WTC11 (cell line): ENCODE measurements at regions of chr2 and their contacts with region 1.

Region 1: DNA sequence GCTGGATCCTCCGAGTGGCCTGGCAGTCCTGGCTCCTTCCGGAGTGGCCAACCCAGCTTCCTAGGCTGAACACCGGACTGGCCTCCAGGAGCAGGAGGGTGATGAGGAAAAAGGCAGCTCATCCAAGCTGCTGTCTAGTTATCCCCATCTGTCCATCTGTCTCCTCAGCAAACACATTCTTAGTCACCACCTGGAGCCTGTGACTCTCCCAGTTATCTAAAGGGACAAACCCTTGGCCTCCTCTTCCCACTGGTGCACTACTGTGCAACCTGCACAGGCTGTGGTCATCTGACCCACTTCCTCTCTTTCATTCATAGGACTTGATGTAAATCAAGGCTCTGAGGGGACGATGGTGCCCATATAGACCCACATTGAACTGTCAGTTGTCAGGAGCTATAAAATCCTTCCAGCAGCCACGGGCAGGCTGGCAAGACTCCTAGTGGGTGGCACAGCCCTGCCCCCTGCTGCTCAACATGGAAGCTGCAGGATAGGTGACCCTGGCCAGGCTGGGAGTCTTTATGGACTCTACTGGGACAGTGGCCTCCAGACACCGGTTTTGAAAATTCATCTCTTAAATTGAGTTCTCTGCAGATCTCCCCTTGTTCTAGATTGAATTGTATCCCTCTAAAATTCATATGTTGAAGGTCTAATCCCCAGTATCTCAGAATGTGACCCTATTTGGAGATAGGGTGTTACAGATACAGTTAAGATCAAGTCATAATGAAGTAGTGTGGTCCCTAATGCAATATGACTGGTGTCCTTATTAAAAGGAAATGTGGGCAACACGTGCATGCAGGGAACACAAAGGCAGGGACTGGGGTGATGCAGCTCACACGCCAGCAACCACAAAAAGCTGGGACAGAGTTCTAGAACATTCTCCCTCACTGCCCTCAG is 29.3 kb upstream of the DUSP2 start:
- DNase-seq: peak; percentile 82
- ATAC-seq: peak; percentile 98
- H3K4me3 Mint-ChIP-seq: no peak overlapping the region
- H3K27ac Mint-ChIP-seq: no peak overlapping the region
- H3K4me1 Mint-ChIP-seq: no peaks in the 10 kb centered on the region
- H3K27me3 Mint-ChIP-seq: no peaks in the 10 kb centered on the region
- CTCF ChIP-seq: peak; percentile 76

Region 2: GRCh38 chr2:96024336-96025193 is 149.9 kb before region 1 on chr2:
- CTCF ChIA-PET with region 1: interaction called, 15 read pairs
- POLR2A ChIA-PET with region 1: no interaction called
- DNase-seq: no peak
- ATAC-seq: no peak
- H3K4me3 Mint-ChIP-seq: no peak overlapping the region
- H3K27ac Mint-ChIP-seq: no peak overlapping the region
- H3K4me1 Mint-ChIP-seq: 0 out of 2 replicates have a peak, but pooled peaks cover 3% of the 10 kb centered on the region
- H3K27me3 Mint-ChIP-seq: no peaks in the 10 kb centered on the region
- CTCF ChIP-seq: no peak

Region 3: GRCh38 chr2:96108541-96109360 is 65.7 kb before region 1 on chr2:
- CTCF ChIA-PET with region 1: interaction called, 20 read pairs
- POLR2A ChIA-PET with region 1: no interaction called
- DNase-seq: peak; percentile 38
- ATAC-seq: peak; percentile 74
- H3K4me3 Mint-ChIP-seq: peak overlapping the region; percentile 33; the same call in 1 of the 2 replicates
- H3K27ac Mint-ChIP-seq: peak overlapping the region; percentile 19; the same call in 1 of the 2 replicates
- H3K4me1 Mint-ChIP-seq: peaks cover 23% of the 10 kb centered on the region
- H3K27me3 Mint-ChIP-seq: no peaks in the 10 kb centered on the region; the same call in 1 of the 2 replicates
- CTCF ChIP-seq: no peak

Region 4: GRCh38 chr2:96116879-96117697 is 57.4 kb before region 1 on chr2:
- CTCF ChIA-PET with region 1: interaction called, 36 read pairs
- POLR2A ChIA-PET with region 1: no interaction called
- DNase-seq: peak; percentile 65
- ATAC-seq: peak; percentile 72
- H3K4me3 Mint-ChIP-seq: peak overlapping the region; percentile 59
- H3K27ac Mint-ChIP-seq: no peak overlapping the region
- H3K4me1 Mint-ChIP-seq: peaks cover 28% of the 10 kb centered on the region
- H3K27me3 Mint-ChIP-seq: peaks cover 40% of the 10 kb centered on the region
- CTCF ChIP-seq: peak; percentile 75

Region 5: DNA sequence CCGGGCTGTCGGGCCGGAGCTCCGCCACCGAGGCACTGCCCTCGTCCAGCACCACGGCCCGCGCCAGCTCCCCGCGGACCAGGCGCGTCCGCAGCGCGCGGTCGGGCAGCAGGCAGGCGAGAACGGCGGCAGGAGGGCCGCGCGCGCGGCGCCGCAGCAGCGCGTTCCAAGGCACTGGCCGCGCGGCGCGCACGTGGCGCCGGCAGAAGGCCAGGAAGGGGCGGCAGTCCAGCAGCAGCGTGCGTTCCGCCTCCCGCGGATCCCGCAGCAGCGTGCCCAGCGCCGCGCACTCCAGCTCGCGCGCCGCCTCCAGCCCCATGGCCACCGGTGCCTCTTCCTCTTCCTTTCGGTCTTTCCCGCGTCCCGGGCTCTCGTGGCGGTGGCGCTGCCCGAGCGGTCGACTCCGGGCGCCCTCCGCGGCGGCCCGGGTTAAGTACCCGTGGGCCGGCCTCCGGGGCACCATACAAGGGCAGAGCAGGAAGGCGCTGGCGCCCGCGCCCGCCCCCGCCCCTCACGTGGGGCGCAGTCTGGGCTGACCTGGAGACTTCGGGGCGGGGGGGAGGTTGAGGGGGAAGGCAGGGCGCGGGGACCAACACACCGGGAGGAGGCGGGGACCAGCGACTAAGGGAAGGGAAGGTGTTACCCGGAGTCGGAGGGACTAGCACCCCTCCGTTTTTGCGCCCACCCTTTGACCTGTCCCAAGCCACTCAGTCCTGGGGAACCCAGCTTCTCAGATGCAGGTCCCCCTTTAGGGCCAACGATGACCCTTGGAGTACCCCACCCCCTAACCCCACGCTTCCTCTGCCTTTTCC is 29.3 kb before region 1 on chr2 and contains the start of gene DUSP2:
- CTCF ChIA-PET with region 1: interaction called, 214 read pairs
- POLR2A ChIA-PET with region 1: interaction called, 4 read pairs
- DNase-seq: peak; percentile 54
- ATAC-seq: peak; percentile 38
- H3K4me3 Mint-ChIP-seq: peak within 1 kb of the TSS; percentile 76
- H3K27ac Mint-ChIP-seq: no peak within 1 kb of the TSS
- H3K4me1 Mint-ChIP-seq: peaks cover 25% of the 10 kb centered on the region
- H3K27me3 Mint-ChIP-seq: peaks cover 35% of the 10 kb centered on the region
- CTCF ChIP-seq: no peak
- total RNA-seq, gene DUSP2: 4.7 to 6.8 TPM (median 5.8 TPM) in 3 replicates

Region 6: GRCh38 chr2:96157651-96158553 is 16.6 kb before region 1 on chr2:
- CTCF ChIA-PET with region 1: interaction called, 23 read pairs
- POLR2A ChIA-PET with region 1: no interaction called
- DNase-seq: no peak
- ATAC-seq: peak; percentile 8
- H3K4me3 Mint-ChIP-seq: no peak overlapping the region
- H3K27ac Mint-ChIP-seq: no peak overlapping the region
- H3K4me1 Mint-ChIP-seq: peaks cover 14% of the 10 kb centered on the region
- H3K27me3 Mint-ChIP-seq: no peaks in the 10 kb centered on the region; the same call in 1 of the 2 replicates
- CTCF ChIP-seq: no peak

Region 7: DNA sequence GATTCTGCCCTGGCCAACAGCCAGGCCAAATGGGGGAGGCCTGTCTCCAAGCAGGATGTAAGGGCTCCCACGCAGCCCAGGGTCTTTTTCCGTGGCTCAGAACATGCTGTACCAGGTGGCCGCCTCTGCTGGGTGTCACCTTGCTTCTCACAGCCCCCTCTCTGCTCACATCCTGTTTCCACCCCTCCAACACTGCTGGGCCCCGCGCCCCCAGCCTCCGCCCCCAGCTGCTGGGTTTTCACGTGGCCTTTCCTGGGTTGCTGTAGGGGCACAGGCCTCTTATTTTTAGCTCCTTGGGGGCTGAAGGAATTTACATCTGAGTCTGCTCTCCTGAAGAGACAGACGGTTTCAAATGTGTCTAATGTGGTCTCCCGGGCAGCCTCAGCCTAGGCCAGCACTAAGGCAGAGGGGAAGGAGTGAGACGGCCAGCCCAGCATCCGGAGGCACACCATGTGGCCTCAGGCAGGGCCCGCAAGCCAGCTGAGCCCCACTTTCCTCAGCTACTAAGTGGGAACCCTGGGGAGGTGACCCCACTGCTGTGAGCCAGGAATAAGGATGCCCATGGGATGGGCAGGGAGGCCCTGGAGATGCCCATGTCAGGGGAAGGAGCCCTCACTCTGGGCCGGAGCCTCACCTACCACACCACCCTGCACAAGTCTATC is 10.6 kb before region 1 on chr2:
- CTCF ChIA-PET with region 1: interaction called, 23 read pairs
- POLR2A ChIA-PET with region 1: no interaction called
- DNase-seq: no peak
- ATAC-seq: no peak
- H3K4me3 Mint-ChIP-seq: no peak overlapping the region
- H3K27ac Mint-ChIP-seq: no peak overlapping the region
- H3K4me1 Mint-ChIP-seq: peaks cover 22% of the 10 kb centered on the region
- H3K27me3 Mint-ChIP-seq: no peaks in the 10 kb centered on the region; the same call in 1 of the 2 replicates
- CTCF ChIP-seq: no peak

Region 8: DNA sequence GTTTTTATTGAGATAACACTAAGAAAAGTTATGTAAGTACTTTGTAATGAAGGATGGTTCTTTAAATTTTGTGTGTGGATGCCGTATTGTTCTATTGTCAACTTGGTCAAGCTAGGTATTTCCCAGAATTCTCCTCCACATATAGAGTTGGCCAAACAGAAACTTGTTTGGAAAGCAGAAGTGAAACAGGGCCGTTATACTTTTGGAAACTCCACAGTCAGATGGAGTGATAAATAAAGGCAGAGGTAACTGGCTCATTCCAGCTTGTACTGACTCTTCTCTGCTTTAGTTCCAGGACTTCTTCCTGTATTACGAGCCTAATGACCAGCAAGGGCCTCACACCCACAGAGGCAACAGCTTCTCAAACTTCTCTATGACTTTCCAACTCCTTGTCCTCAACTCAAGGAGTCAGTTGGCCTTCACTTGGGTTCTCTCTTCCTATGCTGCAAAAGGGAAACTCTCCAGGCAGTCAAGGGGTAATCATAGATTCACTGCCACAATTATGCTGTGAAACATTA is 50.6 kb after region 1 on chr2:
- CTCF ChIA-PET with region 1: no interaction called
- POLR2A ChIA-PET with region 1: no interaction called
- DNase-seq: no peak
- ATAC-seq: no peak
- H3K4me3 Mint-ChIP-seq: no peak overlapping the region
- H3K27ac Mint-ChIP-seq: no peak overlapping the region
- H3K4me1 Mint-ChIP-seq: peaks cover 12% of the 10 kb centered on the region
- H3K27me3 Mint-ChIP-seq: no peaks in the 10 kb centered on the region
- CTCF ChIP-seq: no peak

Region 9: GRCh38 chr2:96423828-96424227 is 249.3 kb after region 1 on chr2:
- CTCF ChIA-PET with region 1: no interaction called
- POLR2A ChIA-PET with region 1: no interaction called
- DNase-seq: no peak
- ATAC-seq: no peak
- H3K4me3 Mint-ChIP-seq: no peak overlapping the region
- H3K27ac Mint-ChIP-seq: no peak overlapping the region
- H3K4me1 Mint-ChIP-seq: peaks cover 7% of the 10 kb centered on the region
- H3K27me3 Mint-ChIP-seq: peaks cover 3% of the 10 kb centered on the region
- CTCF ChIP-seq: no peak